SK-N-SH (cell line): ENCODE measurements at regions of chr4 and their contacts with region 1.

Region 1: GRCh38 chr4:17552427-17552826 is 24.6 kb upstream of the LAP3 start:
- DNase-seq: peak; percentile 60
- H3K4me3 ChIP-seq: no peak overlapping the region
- H3K27ac ChIP-seq: no peak overlapping the region; a peak in 1 of 4 replicates
- H3K4me1 ChIP-seq: peaks cover 0 to 5% of the 10 kb centered on the region in 2 experiments; a peak in 1 of 4 replicates
- H3K27me3 ChIP-seq: peaks cover 10% of the 10 kb centered on the region; the same call in 1 of the 2 replicates
- CTCF ChIP-seq: no peak
- EP300 ChIP-seq: peak in 1 of 2 experiments; percentile 79; a peak in 2 of 4 replicates
- RAD21 ChIP-seq: peak; percentile 16; the same call in 1 of the 2 replicates

Region 2: GRCh38 chr4:17427991-17428390 is 124.4 kb before region 1 on chr4:
- CTCF ChIA-PET with region 1: no interaction called
- POLR2A ChIA-PET with region 1: no interaction called
- DNase-seq: no peak
- H3K4me3 ChIP-seq: no peak overlapping the region
- H3K27ac ChIP-seq: no peak overlapping the region
- H3K4me1 ChIP-seq: no peaks in the 10 kb centered on the region
- H3K27me3 ChIP-seq: no peaks in the 10 kb centered on the region; the same call in 1 of the 2 replicates
- CTCF ChIP-seq: no peak
- EP300 ChIP-seq: no peak
- RAD21 ChIP-seq: no peak

Region 3: DNA sequence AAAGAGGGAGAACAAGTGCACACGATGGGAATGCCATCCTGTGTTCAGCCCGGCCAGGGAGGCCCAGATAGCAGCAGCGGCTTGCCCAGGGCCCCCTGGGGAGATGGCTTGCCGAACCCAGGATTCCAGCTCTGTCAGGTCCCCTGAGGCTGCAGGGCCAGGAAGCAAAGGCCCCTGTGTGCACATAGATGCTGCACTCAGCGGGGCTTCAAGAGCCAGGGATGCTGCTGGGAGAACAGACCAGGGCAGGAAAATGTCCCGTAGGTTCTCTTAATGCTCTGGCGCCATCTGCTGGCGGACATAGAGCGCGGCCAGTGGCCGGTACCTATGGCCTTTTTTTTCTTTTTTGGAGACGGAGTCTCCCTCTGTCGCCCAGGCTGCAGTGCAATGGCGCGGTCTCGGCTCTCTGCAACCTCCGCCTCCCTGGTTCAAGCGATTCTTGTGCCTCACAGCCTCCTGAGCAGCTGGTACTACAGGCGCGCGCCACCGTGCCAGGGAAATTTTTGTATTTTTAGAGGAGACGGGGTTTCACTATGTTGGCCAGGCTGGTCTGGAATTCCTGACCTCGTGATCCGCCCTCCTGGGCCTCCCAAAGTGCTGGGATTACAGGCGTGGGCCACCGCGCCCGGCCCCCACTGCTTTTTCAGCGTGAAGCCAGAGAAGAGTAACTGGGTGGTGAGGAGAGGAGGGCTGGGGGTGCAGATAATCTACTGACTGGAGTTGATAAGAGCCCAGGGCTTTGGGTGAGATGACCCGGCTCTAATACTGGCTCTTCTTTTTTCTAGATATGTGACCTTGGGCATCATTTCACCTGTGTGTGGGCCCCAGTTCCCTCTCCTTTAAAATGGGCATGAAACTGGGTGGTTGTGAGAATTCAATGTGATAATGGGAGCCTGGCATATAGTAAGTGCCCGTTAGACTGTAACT is 84.5 kb after region 1 on chr4:
- CTCF ChIA-PET with region 1: interaction called, 42 read pairs
- POLR2A ChIA-PET with region 1: no interaction called
- DNase-seq: peak; percentile 92
- H3K4me3 ChIP-seq: peak overlapping the region in 1 of 2 experiments; percentile 53; a peak in 1 of 4 replicates
- H3K27ac ChIP-seq: no peak overlapping the region
- H3K4me1 ChIP-seq: no peaks in the 10 kb centered on the region; a peak in 1 of 4 replicates
- H3K27me3 ChIP-seq: no peaks in the 10 kb centered on the region
- CTCF ChIP-seq: peak; percentile 92
- EP300 ChIP-seq: no peak
- RAD21 ChIP-seq: peak; percentile 81

Region 4: DNA sequence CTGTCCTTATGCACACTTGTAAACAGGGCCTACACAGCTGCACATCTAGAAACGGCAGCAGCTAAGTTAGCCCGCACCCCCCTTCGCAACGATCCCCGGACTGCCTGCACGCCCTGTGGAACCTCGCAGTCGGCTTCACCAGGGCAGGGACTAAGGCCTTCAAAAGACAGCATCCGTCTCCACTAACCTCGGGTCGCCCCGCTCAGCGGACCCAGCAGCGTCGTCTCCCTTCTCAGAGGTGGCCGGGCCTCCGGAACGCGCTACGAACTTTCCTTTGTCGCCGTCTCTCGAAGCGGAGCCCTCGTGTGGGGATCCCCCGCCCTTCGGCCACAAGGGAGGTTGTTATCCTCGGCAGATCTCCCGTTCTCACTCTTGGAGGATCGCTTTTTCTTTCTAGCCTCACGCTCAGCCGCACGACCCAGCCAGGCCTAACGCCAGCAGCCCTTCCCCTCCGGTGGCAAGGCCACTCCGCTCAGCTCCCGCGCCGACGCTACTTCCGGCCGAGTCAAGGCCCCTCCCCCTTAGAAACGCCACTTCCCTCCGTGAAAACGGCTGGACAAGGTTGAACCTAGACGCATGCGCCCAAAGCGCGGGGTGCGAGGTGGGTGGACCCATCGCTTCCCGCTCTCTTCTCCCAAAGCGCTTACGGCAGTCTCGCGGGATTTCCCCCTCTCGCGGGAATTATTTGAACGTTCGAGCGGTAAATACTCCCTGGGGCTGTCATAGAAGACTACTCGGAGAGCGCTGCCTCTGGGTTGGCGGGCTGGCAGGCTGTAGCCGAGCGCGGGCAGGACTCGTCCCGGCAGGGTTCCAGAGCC is 258.0 kb after region 1 on chr4 and contains the starts of genes DCAF16 and NCAPG:
- CTCF ChIA-PET with region 1: interaction called, 44 read pairs
- POLR2A ChIA-PET with region 1: no interaction called
- DNase-seq: peak; percentile 96
- H3K4me3 ChIP-seq: peak within 1 kb of the TSS; percentile 89 to 98
- H3K27ac ChIP-seq: peak within 1 kb of the TSS; percentile 93
- H3K4me1 ChIP-seq: peaks cover 4 to 22% of the 10 kb centered on the region in 2 experiments; a peak in 3 of 4 replicates
- H3K27me3 ChIP-seq: no peaks in the 10 kb centered on the region
- CTCF ChIP-seq: no peak
- EP300 ChIP-seq: no peak; a peak in 1 of 4 replicates
- RAD21 ChIP-seq: no peak
- polyA plus RNA-seq, gene DCAF16: 23.5 and 28.5 TPM in 2 replicates
- polyA plus RNA-seq, gene NCAPG: 4.8 and 5.4 TPM in 2 replicates